ENCODE measurements at regions of chr17 and their contacts with region 1.

Region 1: GRCh38 chr17:31437720-31438420 is 46.4 kb downstream of the RAB11FIP4 start:
- DNase-seq: no peak
- H3K27ac ChIP-seq: no peak overlapping the region
- CTCF ChIP-seq: no peak

Region 2: DNA sequence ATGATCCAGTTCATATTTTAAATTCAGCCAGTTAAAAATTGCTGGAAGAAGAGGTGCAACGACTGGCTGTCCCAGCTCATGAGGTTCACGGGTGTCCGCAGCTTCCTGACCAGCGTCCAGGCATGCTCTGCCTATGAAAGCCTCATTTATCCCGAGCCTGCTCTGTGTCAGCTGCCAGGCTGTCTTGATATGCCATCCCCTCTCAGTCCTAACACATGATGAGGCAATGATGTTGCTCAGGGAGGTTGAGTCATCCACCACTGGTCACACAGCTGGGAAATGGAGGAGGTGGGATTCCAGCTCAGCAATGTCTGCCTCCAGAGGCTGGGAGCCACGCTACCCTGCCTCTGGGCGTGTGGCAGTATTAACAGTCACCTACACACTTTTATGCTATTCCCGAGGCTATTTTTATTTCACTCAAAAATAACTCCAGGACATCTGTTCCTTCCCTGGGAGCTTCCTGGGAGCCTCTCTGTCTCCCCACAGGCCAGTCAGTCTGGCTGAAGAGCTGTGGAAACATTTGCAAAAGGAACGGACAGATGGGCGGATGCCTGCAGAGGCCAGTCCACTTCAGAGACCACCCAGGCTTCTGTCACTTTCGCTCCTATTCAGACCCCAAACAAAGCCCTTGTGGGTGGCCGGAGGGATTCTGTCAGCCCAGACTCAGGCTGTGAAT is 23.9 kb before region 1 on chr17:
- CTCF ChIA-PET with region 1: interaction called, 10 read pairs
- POLR2A ChIA-PET with region 1: no interaction called
- DNase-seq: peak; percentile 49
- H3K27ac ChIP-seq: no peak overlapping the region
- CTCF ChIP-seq: no peak

Region 3: DNA sequence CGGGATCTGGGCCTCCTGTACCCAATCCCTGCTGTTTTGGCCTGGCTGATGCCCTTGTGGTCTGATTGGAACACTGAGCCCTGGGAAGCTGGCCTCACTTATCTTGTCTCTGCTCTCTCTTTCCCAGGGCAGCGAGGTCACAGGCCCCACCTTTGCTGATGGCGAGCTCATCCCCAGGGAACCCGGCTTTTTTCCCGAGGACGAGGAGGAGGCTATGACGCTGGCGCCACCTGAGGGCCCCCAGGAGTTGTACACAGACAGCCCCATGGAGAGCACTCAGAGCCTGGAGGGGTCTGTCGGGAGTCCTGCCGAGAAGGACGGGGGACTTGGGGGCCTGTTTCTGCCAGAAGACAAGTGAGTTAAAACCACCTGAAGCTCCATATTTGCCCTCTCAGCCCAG is 79.7 kb after region 1 on chr17:
- CTCF ChIA-PET with region 1: interaction called, 43 read pairs
- POLR2A ChIA-PET with region 1: no interaction called
- DNase-seq: peak; percentile 30
- H3K27ac ChIP-seq: no peak overlapping the region
- CTCF ChIP-seq: peak; percentile 30

Region 4: DNA sequence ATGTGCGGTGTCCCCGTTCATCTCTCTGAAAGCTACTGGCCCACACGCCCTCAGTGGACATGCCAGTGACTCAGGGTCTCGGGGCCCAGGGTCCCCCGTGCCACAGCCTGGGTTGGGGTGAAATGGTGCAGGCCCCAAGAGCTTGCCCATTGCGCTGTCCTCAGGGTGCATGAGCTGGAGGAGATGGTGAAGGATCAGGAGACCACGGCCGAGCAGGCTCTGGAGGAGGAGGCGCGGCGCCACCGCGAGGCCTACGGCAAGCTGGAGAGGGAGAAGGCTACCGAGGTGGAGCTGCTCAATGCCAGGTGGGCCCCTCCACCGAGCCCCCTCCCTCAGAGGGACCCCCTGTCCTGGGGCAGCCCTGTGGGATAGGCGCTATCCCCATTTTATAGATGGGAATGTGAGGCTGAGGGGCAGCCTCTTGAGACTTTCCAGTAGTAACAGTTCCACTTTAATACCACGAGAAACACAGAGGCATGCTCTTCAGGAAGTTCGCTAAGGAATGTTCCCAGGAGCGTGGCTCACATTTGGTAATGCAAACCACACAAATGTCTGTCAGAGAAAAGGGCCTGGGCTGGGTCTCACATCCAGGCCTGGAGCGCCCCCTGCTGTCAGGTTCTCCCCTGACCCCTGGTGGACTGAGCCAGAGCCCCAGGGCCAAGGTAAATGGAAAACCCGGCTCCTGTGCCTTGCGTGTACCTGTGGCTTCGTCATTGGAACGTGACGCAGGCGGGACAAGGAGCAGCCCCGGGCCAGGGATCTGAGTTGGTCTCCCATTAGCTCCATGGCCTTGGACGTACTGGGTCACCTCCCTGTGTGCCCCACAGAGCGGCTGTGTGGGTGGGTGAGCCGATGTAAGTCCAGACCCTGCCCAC is 87.3 kb after region 1 on chr17:
- CTCF ChIA-PET with region 1: interaction called, 43 read pairs
- POLR2A ChIA-PET with region 1: no interaction called
- DNase-seq: peak; percentile 85
- H3K27ac ChIP-seq: no peak overlapping the region
- CTCF ChIP-seq: peak; percentile 91